HEK293T (cell line): ENCODE measurements at regions of chr15 and their contacts with region 1.

Region 1: DNA sequence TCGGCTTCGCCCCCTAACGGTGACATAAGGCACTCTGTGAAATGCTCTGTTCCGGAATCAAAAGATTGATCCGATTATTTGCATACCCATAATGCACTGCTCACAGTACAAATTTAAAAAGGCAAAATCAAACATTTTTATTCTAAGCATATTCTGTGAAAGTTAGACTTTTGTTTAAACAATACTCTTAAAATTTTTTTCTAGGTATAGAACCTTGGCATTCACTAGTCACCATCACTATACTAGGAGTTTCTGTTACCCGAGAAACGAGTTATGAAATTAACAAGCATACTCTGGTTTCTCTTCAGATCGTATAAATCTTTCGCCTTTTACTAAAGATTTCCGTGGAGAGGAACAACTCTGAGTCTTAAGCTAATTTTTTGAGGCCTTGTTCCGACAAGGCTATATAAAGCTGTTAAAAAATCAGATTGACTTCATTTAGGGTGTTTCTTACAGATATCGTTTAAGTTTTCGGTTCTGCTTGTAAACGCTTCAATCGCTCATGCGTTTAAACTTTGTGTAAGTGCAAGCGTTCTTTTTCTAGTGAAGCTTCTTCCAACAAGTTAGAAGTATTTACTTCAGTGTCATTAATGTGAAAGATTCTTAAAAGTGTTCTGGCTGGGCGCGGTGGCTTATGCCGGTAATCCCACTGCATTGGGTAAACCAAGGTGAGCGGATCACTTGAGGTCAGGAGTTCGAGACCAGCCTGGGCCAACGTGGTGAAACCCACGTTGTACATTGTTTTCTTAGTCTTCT is at the start of gene RNU5B-1:
- DNase-seq: peak; percentile 77

Region 2: GRCh38 chr15:65133548-65134200 is 170.9 kb before region 1 on chr15 and contains the start of gene PDCD7:
- CTCF ChIA-PET with region 1: no interaction called
- POLR2A ChIA-PET with region 1: no interaction called
- DNase-seq: peak; percentile 88

Region 3: GRCh38 chr15:65286704-65287519 is 17.7 kb before region 1 on chr15 and contains the start of gene PARP16:
- CTCF ChIA-PET with region 1: interaction called, 3 read pairs
- POLR2A ChIA-PET with region 1: interaction called, 71 read pairs
- DNase-seq: peak; percentile 86

Region 4: DNA sequence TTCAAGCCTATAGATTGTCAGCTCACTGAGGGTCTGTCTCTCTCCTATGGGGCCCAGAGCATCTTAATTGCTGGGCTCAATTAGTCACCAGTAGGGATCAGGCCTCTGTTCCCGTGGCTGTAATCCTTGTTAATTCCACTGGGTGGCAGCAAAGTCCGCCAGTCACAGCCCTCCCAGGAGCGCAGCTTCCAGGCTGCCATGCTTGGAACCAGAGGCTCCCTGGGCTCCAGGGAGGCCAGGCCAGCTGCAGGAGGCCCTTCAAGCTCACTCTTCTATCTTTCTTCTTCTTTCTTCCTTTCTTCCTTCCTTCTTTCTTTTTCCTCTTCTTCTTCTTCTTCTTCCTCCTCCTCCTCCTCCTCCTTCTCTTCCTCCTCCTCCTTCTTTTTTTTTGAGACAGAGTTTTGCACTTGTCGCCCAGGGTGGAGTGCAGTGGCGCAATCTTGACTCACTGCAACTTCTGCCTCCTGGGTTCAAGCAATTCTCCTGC is 14.3 kb after region 1 on chr15:
- CTCF ChIA-PET with region 1: interaction called, 3 read pairs
- POLR2A ChIA-PET with region 1: interaction called, 31 read pairs
- DNase-seq: peak; percentile 89

Region 5: GRCh38 chr15:65384895-65385858 is 80.6 kb after region 1 on chr15:
- CTCF ChIA-PET with region 1: interaction called, 8 read pairs
- POLR2A ChIA-PET with region 1: interaction called, 35 read pairs
- DNase-seq: peak; percentile 92